ENCODE measurements at regions of chr3 and their contacts with region 1.

Region 1: DNA sequence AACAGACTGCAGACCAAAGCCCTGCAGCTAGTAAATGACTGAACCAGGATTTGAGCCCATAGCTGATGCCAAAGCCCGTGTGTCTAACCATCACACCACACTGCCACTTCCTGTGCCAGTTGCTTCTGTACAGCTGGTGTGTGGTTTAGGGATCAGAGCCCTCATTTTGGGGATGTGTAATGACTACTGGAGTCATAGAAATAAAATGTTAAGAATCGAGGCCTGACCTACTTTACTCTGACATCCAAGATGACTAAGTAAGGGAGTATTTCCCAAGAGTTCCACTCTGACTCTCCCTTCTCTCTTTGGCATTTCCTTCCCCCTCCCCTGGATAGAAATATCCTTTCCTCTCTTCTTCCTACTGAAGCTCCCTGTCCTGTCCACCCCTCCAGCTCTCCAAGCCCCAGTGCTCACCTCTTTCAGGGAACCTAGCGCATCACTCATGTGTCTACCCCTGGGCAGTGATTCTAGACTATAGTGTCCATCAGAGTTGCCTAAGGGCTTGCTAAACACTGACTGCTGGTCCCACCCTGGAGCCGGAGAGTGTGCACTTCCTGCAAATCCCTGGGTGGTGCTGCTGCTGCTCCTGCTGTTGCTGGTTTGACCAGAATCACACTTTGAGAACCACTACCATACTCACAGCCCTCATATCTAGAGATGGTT is 53.8 kb downstream of the MGLL start:
- DNase-seq: peak; percentile 99
- ATAC-seq: peak; percentile 87
- H3K4me3 ChIP-seq: no peak overlapping the region
- H3K27ac ChIP-seq: peak overlapping the region; percentile 99
- H3K4me1 ChIP-seq: peaks cover 30% of the 10 kb centered on the region
- H3K27me3 ChIP-seq: no peaks in the 10 kb centered on the region
- CTCF ChIP-seq: peak; percentile 19
- POLR2A ChIP-seq: no peak
- RAD21 ChIP-seq: peak; percentile 33; the same call in 1 of the 2 replicates

Region 2: DNA sequence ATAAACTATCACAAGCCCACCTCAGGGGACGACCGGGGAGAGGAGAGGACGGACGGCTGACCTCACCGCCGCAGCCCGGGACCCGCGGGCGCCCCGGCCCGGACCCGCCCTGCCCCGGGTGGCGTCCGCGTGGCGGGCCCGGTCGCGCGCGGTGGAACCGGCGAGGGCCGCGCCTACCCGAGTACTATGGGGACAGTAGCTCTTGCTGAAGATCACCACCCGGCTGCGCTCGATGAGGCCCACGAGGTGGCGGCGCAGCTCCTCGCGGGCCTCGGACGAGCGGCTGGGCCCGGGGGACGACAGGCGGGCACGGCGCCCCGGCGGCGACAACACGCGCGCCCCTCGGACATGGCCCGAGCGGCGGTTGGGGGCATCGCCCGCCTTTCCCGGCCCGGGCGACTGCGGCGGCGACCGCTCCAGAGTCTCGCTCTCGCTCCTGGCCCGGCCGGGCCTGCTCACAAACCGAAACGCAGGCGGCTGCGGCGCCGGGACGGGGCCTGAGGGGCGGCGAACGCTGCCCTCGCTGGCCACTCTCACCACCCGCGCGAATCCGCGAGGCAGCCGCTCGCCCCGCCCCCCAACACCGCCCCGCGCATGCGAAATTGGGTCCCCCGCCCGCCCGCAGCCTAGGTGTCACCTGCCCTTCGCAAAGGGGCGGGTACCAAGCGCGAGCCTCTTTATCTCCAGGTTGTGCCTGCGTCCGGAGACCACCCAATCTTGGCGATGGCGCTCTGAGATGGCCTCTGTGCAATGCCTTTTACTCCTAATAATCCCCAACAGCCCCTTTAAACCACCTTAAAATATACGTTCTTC is 1113.7 kb before region 1 on chr3 and contains the start of gene TXNRD3:
- CTCF ChIA-PET with region 1: no interaction called
- POLR2A ChIA-PET with region 1: no interaction called
- dilution Hi-C with region 1: no loop called
- in situ Hi-C with region 1: no loop called
- intact Hi-C with region 1: no loop called
- DNase-seq: peak; percentile 49
- ATAC-seq: peak; percentile 97
- H3K4me3 ChIP-seq: peak within 1 kb of the TSS; percentile 92
- H3K27ac ChIP-seq: peak within 1 kb of the TSS; percentile 59; the same call in 1 of the 2 replicates
- H3K4me1 ChIP-seq: no peaks in the 10 kb centered on the region
- H3K27me3 ChIP-seq: peaks cover 7% of the 10 kb centered on the region
- CTCF ChIP-seq: peak; percentile 5; the same call in 1 of the 2 replicates
- POLR2A ChIP-seq: peak; percentile 64; the same call in 1 of the 2 replicates
- RAD21 ChIP-seq: 0 out of 2 replicates have a peak, but pooled peaks have one; percentile 16
- total RNA-seq, gene TXNRD3: 8.1 and 8.4 TPM in 2 replicates

Region 3: DNA sequence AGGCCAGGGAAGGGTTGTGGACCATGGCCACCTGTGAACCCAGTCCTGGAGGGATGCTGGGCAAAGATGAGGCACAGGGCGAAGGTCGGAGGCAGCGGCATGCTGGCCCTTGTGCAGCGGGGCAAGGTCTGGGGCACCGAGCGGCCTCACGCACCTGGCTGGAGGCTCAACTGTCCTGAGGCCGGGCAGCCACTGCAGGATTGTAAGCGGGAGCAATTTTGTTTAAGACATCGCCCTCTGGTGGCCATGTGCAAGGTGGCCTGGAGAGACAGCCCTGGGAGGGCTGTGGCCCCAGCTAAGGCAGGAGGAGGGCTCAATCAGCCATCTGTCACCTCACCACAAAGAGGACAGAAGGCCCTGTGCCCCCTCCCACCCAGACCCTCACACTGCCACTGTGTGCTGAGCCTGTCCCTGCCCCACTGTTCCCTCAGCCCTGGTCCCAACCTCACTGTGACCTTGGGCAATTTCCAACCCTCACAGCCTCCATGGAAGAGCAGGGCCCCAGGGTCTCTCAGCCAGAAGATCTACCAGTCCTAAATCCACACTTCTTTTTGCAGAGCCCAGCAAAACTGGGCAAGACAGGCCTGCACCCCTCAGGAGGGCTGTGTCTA is 224.2 kb before region 1 on chr3:
- CTCF ChIA-PET with region 1: no interaction called
- POLR2A ChIA-PET with region 1: no interaction called
- dilution Hi-C with region 1: no loop called
- in situ Hi-C with region 1: no loop called
- intact Hi-C with region 1: no loop called
- DNase-seq: peak; percentile 60
- ATAC-seq: peak; percentile 70
- H3K4me3 ChIP-seq: no peak overlapping the region
- H3K27ac ChIP-seq: no peak overlapping the region
- H3K4me1 ChIP-seq: no peaks in the 10 kb centered on the region; the same call in 1 of the 2 replicates
- H3K27me3 ChIP-seq: peaks cover 25% of the 10 kb centered on the region; the same call in 1 of the 2 replicates
- CTCF ChIP-seq: peak; percentile 69
- POLR2A ChIP-seq: no peak
- RAD21 ChIP-seq: peak; percentile 62

Region 4: DNA sequence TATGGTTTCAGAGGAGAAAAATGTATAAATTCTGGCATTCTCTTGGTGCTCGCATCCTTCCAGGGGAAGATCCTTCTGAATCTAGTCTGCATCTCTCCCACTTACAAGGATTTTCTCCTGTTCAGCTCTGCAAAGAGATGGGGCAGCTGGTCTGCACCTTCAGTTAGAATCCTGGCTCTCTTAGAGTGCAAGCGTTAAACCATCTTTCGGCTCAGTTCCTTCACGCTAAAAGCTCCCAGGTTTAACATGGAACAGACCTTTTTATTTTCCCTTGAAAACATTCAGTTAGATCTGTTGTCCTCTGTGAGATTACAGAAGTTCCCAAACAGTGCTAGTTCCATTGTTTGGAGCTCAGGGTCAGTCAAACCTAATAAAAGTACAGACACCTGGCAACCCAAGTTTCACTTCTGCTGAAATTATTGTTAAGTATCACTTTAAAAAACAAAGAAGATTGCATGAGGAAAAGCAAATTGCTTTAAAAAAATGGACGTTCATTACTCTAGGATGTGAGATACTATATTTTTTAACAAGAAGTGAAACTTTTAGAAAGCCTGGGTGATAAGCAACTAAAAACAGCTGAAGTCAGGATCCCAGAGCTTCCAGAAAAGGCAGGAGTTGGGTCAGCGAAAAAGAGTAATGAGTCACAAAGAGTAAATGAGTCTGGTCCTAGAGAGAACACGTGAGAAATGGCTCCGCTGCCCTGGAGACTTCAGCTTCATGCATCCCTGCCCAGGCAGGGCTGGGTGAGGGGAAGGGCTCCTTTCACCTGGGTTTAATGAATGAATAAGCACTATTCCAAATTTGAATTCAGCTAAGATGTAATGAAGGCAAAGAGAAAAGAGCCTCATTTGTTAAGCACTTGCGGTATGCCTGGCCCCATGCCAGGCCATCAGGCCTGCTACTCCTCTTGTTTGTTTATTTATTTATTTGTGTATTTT is 32.4 kb before region 1 on chr3:
- CTCF ChIA-PET with region 1: no interaction called
- POLR2A ChIA-PET with region 1: no interaction called
- dilution Hi-C with region 1: no loop called
- in situ Hi-C with region 1: no loop called
- intact Hi-C with region 1: loop called (anchors 1 kb)
- DNase-seq: peak; percentile 86
- ATAC-seq: peak; percentile 33; the same call in 1 of the 2 replicates
- H3K4me3 ChIP-seq: no peak overlapping the region
- H3K27ac ChIP-seq: peak overlapping the region; percentile 60
- H3K4me1 ChIP-seq: peaks cover 25% of the 10 kb centered on the region
- H3K27me3 ChIP-seq: no peaks in the 10 kb centered on the region
- CTCF ChIP-seq: no peak
- POLR2A ChIP-seq: no peak
- RAD21 ChIP-seq: no peak

Region 5: GRCh38 chr3:127747723-127748521 is 20.6 kb before region 1 on chr3:
- CTCF ChIA-PET with region 1: no interaction called
- POLR2A ChIA-PET with region 1: no interaction called
- dilution Hi-C with region 1: no loop called
- in situ Hi-C with region 1: no loop called
- intact Hi-C with region 1: loop called (anchors 2 kb)
- DNase-seq: peak; percentile 95
- ATAC-seq: peak; percentile 84
- H3K4me3 ChIP-seq: no peak overlapping the region
- H3K27ac ChIP-seq: peak overlapping the region; percentile 35
- H3K4me1 ChIP-seq: peaks cover 34% of the 10 kb centered on the region
- H3K27me3 ChIP-seq: no peaks in the 10 kb centered on the region
- CTCF ChIP-seq: peak; percentile 45
- POLR2A ChIP-seq: no peak
- RAD21 ChIP-seq: peak; percentile 59

Measured in IMR-90 (cell line).